Sciatic nerve (tissue), 2 donors: ENCODE measurements at regions of chr13 and their contacts with region 1.

Region 1: GRCh38 chr13:24233351-24233901 is 72.9 kb downstream of the SPATA13 start:
- DNase-seq: no peak
- ATAC-seq: peak; percentile 57

Region 2: GRCh38 chr13:23921451-23921888 is 312.0 kb before region 1 on chr13:
- intact Hi-C with region 1: loop called (anchors 10 kb)
- DNase-seq: no peak
- ATAC-seq: no peak

Region 3: GRCh38 chr13:24053519-24054251 is 179.7 kb before region 1 on chr13:
- intact Hi-C with region 1: no loop called
- DNase-seq: no peak
- ATAC-seq: peak; percentile 76